Activated T-helper 1 cell treated with anti-CD3 and anti-CD28 coated beads, Interleukin-12 subunit alpha, Interleukin-12 subunit beta, Interleukin-2, Interleukin-4 antibody, amounts not matched to agents 30 ng/mL and 10 ng/mL and 1 ng/mL, durations not matched to agents 14 hours and 24 hours and 36 hours (primary cell): ENCODE measurements at regions of chr4 and their contacts with region 1.

Region 1: GRCh38 chr4:150436598-150437370 is 145.2 kb upstream of the MAB21L2 start:
- DNase-seq: no peak
- H3K4me3 Mint-ChIP-seq: no peak overlapping the region
- H3K27ac Mint-ChIP-seq: peak overlapping the region; percentile 1
- H3K4me1 Mint-ChIP-seq: peaks cover 13% of the 10 kb centered on the region
- H3K27me3 Mint-ChIP-seq: no peaks in the 10 kb centered on the region

Region 2: DNA sequence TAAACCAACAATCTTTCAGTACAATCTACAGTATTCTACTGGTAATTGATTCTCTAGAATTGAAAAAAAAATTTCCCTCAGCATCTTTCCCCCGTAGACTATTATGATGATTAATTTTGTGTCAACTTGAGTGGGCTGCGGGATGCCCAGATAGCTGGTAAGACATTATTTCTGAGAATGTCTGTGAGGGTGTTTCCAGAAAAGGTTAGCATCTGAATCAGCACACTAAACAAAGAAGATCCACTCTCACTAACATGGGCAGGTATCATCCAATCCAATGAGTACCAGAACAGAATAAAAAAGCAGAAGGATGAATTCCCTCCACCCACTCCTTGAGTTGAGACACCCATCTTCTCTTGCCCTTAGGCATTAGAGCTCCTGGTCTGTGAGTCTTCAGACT is 40.9 kb before region 1 on chr4:
- intact Hi-C with region 1: loop called (anchors 1 kb)
- DNase-seq: no peak
- H3K4me3 Mint-ChIP-seq: no peak overlapping the region
- H3K27ac Mint-ChIP-seq: peak overlapping the region; percentile 87
- H3K4me1 Mint-ChIP-seq: peaks cover 15% of the 10 kb centered on the region
- H3K27me3 Mint-ChIP-seq: no peaks in the 10 kb centered on the region

Region 3: GRCh38 chr4:150402871-150403272 is 33.9 kb before region 1 on chr4:
- intact Hi-C with region 1: loop called (anchors 1 kb)
- DNase-seq: no peak
- H3K4me3 Mint-ChIP-seq: no peak overlapping the region
- H3K27ac Mint-ChIP-seq: no peak overlapping the region
- H3K4me1 Mint-ChIP-seq: no peaks in the 10 kb centered on the region
- H3K27me3 Mint-ChIP-seq: peaks cover 2% of the 10 kb centered on the region

Region 4: GRCh38 chr4:150493851-150494250 is 57.1 kb after region 1 on chr4:
- intact Hi-C with region 1: loop called (anchors 2 kb)
- DNase-seq: no peak
- H3K4me3 Mint-ChIP-seq: no peak overlapping the region
- H3K27ac Mint-ChIP-seq: no peak overlapping the region
- H3K4me1 Mint-ChIP-seq: no peaks in the 10 kb centered on the region
- H3K27me3 Mint-ChIP-seq: no peaks in the 10 kb centered on the region

Region 5: GRCh38 chr4:150533673-150534072 is 96.9 kb after region 1 on chr4:
- intact Hi-C with region 1: no loop called
- DNase-seq: no peak
- H3K4me3 Mint-ChIP-seq: no peak overlapping the region
- H3K27ac Mint-ChIP-seq: no peak overlapping the region
- H3K4me1 Mint-ChIP-seq: no peaks in the 10 kb centered on the region
- H3K27me3 Mint-ChIP-seq: no peaks in the 10 kb centered on the region